ENCODE measurements at regions of chr11 and their contacts with region 1.

Region 1: GRCh38 chr11:15650105-15650938 is 535.6 kb downstream of the INSC start:
- DNase-seq: peak; percentile 95 to 98
- H3K4me3 ChIP-seq: peak overlapping the region; percentile 33
- H3K4me3 Mint-ChIP-seq: peak overlapping the region; percentile 49
- H3K27ac Mint-ChIP-seq: no peak overlapping the region
- H3K4me1 ChIP-seq: peaks cover 36% of the 10 kb centered on the region
- H3K4me1 Mint-ChIP-seq: peaks cover 21% of the 10 kb centered on the region
- H3K27me3 ChIP-seq: no peaks in the 10 kb centered on the region
- H3K27me3 Mint-ChIP-seq: peaks cover 2% of the 10 kb centered on the region
- CTCF ChIP-seq: peak; percentile 96 to 98

Region 2: DNA sequence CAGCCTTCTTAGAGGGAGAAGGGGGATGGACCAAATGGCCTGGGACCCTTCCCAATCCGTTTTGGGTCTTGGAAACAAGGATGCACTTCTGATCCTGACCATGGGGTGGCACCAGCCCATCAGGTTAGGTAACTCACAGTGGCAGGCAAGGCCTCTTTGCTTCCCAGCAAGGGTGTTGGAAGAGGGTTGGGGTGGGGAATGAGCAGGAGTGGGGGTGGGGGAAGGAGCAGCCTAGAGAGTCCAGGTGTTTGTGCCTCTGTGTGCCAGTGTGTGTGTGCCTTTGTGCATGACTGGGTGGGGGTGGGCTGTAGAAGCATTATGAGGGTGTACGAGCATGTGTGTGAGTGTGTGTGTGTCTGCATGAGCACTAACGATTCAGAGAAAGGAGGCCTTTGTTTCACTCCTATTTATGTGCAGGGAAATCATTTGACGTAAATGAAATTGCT is 322.5 kb before region 1 on chr11:
- CTCF ChIA-PET with region 1: interaction called, 3 read pairs
- POLR2A ChIA-PET with region 1: no interaction called
- intact Hi-C with region 1: loop called (anchors 1 kb)
- DNase-seq: peak; percentile 71 to 78
- H3K4me3 ChIP-seq: no peak overlapping the region
- H3K4me3 Mint-ChIP-seq: no peak overlapping the region
- H3K27ac Mint-ChIP-seq: no peak overlapping the region
- H3K4me1 ChIP-seq: no peaks in the 10 kb centered on the region
- H3K4me1 Mint-ChIP-seq: no peaks in the 10 kb centered on the region
- H3K27me3 ChIP-seq: peaks cover 2% of the 10 kb centered on the region; the same call in 1 of the 2 replicates
- H3K27me3 Mint-ChIP-seq: peaks cover 8% of the 10 kb centered on the region
- CTCF ChIP-seq: peak; percentile 67 to 92

Region 3: GRCh38 chr11:15769203-15769602 is 118.9 kb after region 1 on chr11:
- CTCF ChIA-PET with region 1: no interaction called
- POLR2A ChIA-PET with region 1: no interaction called
- intact Hi-C with region 1: loop called (anchors 1 kb)
- DNase-seq: peak; percentile 59 to 74
- H3K4me3 ChIP-seq: no peak overlapping the region
- H3K4me3 Mint-ChIP-seq: no peak overlapping the region
- H3K27ac Mint-ChIP-seq: peak overlapping the region; percentile 82
- H3K4me1 ChIP-seq: peaks cover 27% of the 10 kb centered on the region
- H3K4me1 Mint-ChIP-seq: peaks cover 29% of the 10 kb centered on the region
- H3K27me3 ChIP-seq: no peaks in the 10 kb centered on the region
- H3K27me3 Mint-ChIP-seq: no peaks in the 10 kb centered on the region
- CTCF ChIP-seq: no peak

Region 4: GRCh38 chr11:15929371-15929901 is 279.1 kb after region 1 on chr11:
- CTCF ChIA-PET with region 1: no interaction called
- POLR2A ChIA-PET with region 1: no interaction called
- intact Hi-C with region 1: loop called (anchors 5 kb)
- DNase-seq: no peak
- H3K4me3 ChIP-seq: no peak overlapping the region
- H3K4me3 Mint-ChIP-seq: no peak overlapping the region
- H3K27ac Mint-ChIP-seq: no peak overlapping the region
- H3K4me1 ChIP-seq: no peaks in the 10 kb centered on the region
- H3K4me1 Mint-ChIP-seq: no peaks in the 10 kb centered on the region
- H3K27me3 ChIP-seq: no peaks in the 10 kb centered on the region
- H3K27me3 Mint-ChIP-seq: no peaks in the 10 kb centered on the region
- CTCF ChIP-seq: no peak

Measured in Caco-2 (cell line).